Breast epithelium (tissue), 4 donors: ENCODE measurements at regions of chr1 and their contacts with region 1.

Region 1: GRCh38 chr1:62281922-62282555 is 37.2 kb downstream of the KANK4 start:
- DNase-seq: no peak
- H3K4me3 ChIP-seq: no peak overlapping the region
- H3K27ac ChIP-seq: no peak overlapping the region
- H3K4me1 ChIP-seq: peaks cover 0 to 2% of the 10 kb centered on the region in 2 donors
- H3K27me3 ChIP-seq: no peaks in the 10 kb centered on the region
- CTCF ChIP-seq: no peak
- POLR2A ChIP-seq: no peak

Region 2: DNA sequence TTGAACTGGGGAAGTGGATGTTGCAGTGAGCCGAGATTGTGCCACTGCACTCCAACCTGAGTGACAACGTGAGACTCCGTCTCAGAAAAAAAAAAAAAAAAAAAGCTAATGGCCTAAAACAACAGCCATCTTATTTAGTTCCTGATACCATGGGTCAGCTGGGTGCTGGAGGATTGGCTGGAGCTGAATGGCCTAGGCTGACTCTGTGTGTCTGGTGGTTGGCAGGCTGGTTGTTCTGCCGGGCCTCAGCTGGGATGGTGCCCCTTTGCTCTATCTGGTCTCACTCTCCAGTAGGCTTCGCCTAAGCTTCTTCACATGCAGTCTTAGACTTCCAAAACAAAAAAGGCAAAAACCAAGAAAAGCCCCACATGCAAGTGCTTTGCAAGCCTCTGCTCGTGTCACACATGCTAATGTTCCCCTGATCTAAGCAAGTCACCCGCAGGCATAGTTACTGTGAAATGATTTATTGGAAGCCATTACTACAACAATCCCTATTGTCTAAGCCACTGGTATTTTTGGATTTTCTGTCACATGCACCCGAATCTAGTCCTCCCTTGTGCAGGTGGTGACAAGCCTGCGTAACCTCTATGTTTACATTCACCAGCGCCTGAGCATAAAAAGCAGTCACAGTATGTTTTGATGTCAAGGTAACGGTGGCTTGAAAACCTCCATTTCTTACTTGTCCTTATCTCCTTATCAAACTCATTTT is 76.8 kb after region 1 on chr1:
- intact Hi-C with region 1: loop called (anchors 2 kb)
- DNase-seq: no peak
- H3K4me3 ChIP-seq: no peak overlapping the region
- H3K27ac ChIP-seq: no peak overlapping the region
- H3K4me1 ChIP-seq: no peaks in the 10 kb centered on the region
- H3K27me3 ChIP-seq: no peaks in the 10 kb centered on the region
- CTCF ChIP-seq: no peak
- POLR2A ChIP-seq: no peak